ENCODE measurements at regions of chr14 and their contacts with region 1.

Region 1: GRCh38 chr14:58244556-58245387 is at the start of gene PSMA3:
- DNase-seq: peak; percentile 98
- ATAC-seq: peak; percentile 92
- H3K4me3 Mint-ChIP-seq: peak within 1 kb of the TSS; percentile 85
- H3K27ac Mint-ChIP-seq: peak within 1 kb of the TSS; percentile 99
- H3K4me1 Mint-ChIP-seq: peaks cover 31% of the 10 kb centered on the region
- H3K27me3 Mint-ChIP-seq: peaks cover under 1% of the 10 kb centered on the region
- CTCF ChIP-seq: no peak
- total RNA-seq, gene PSMA3: 378 to 401 TPM

Region 2: GRCh38 chr14:58199726-58200479 is 44.9 kb before region 1 on chr14 and contains the start of gene ACTR10:
- CTCF ChIA-PET with region 1: interaction called, 3 read pairs
- POLR2A ChIA-PET with region 1: interaction called, 5 read pairs
- intact Hi-C with region 1: loop called (anchors 5 kb)
- DNase-seq: peak; percentile 93
- ATAC-seq: peak; percentile 93
- H3K4me3 Mint-ChIP-seq: peak within 1 kb of the TSS; percentile 93
- H3K27ac Mint-ChIP-seq: peak within 1 kb of the TSS; percentile 93
- H3K4me1 Mint-ChIP-seq: peaks cover 28% of the 10 kb centered on the region
- H3K27me3 Mint-ChIP-seq: no peaks in the 10 kb centered on the region
- CTCF ChIP-seq: no peak
- total RNA-seq, gene ACTR10: 30.3 to 36.5 TPM

Region 3: GRCh38 chr14:58258156-58258555 is 13.4 kb after region 1 on chr14:
- CTCF ChIA-PET with region 1: interaction called, 6 read pairs
- POLR2A ChIA-PET with region 1: interaction called, 24 read pairs
- intact Hi-C with region 1: no loop called
- DNase-seq: no peak
- ATAC-seq: no peak
- H3K4me3 Mint-ChIP-seq: no peak overlapping the region
- H3K27ac Mint-ChIP-seq: peak overlapping the region; percentile 50
- H3K4me1 Mint-ChIP-seq: peaks cover 2% of the 10 kb centered on the region
- H3K27me3 Mint-ChIP-seq: no peaks in the 10 kb centered on the region
- CTCF ChIP-seq: no peak

Region 4: GRCh38 chr14:58265401-58265800 is 20.6 kb after region 1 on chr14:
- CTCF ChIA-PET with region 1: interaction called, 5 read pairs
- POLR2A ChIA-PET with region 1: interaction called, 24 read pairs
- intact Hi-C with region 1: no loop called
- DNase-seq: no peak
- ATAC-seq: no peak
- H3K4me3 Mint-ChIP-seq: no peak overlapping the region
- H3K27ac Mint-ChIP-seq: peak overlapping the region; percentile 63
- H3K4me1 Mint-ChIP-seq: peaks cover 14% of the 10 kb centered on the region
- H3K27me3 Mint-ChIP-seq: no peaks in the 10 kb centered on the region
- CTCF ChIP-seq: no peak

Region 5: GRCh38 chr14:58280954-58281787 is 36.4 kb after region 1 on chr14:
- CTCF ChIA-PET with region 1: no interaction called
- POLR2A ChIA-PET with region 1: interaction called, 4 read pairs
- intact Hi-C with region 1: loop called (anchors 5 kb)
- DNase-seq: peak; percentile 42
- ATAC-seq: peak; percentile 82
- H3K4me3 Mint-ChIP-seq: peak overlapping the region; percentile 59
- H3K27ac Mint-ChIP-seq: peak overlapping the region; percentile 96
- H3K4me1 Mint-ChIP-seq: peaks cover 70% of the 10 kb centered on the region
- H3K27me3 Mint-ChIP-seq: no peaks in the 10 kb centered on the region
- CTCF ChIP-seq: no peak

Region 6: GRCh38 chr14:58297762-58298476 is 53.1 kb after region 1 on chr14:
- CTCF ChIA-PET with region 1: interaction called, 3 read pairs
- POLR2A ChIA-PET with region 1: interaction called, 22 read pairs
- intact Hi-C with region 1: loop called (anchors 2 kb)
- DNase-seq: peak; percentile 99
- ATAC-seq: peak; percentile 88
- H3K4me3 Mint-ChIP-seq: no peak overlapping the region
- H3K27ac Mint-ChIP-seq: no peak overlapping the region
- H3K4me1 Mint-ChIP-seq: peaks cover 37% of the 10 kb centered on the region
- H3K27me3 Mint-ChIP-seq: no peaks in the 10 kb centered on the region
- CTCF ChIP-seq: no peak

Region 7: GRCh38 chr14:58427281-58428117 is 182.7 kb after region 1 on chr14 and contains the starts of genes KIAA0586 and TIMM9:
- CTCF ChIA-PET with region 1: no interaction called
- POLR2A ChIA-PET with region 1: interaction called, 5 read pairs
- intact Hi-C with region 1: loop called (anchors 5 kb)
- DNase-seq: peak; percentile 98
- ATAC-seq: peak; percentile 91
- H3K4me3 Mint-ChIP-seq: peak within 1 kb of the TSS; percentile 88
- H3K27ac Mint-ChIP-seq: peak within 1 kb of the TSS; percentile 99
- H3K4me1 Mint-ChIP-seq: peaks cover 33% of the 10 kb centered on the region
- H3K27me3 Mint-ChIP-seq: no peaks in the 10 kb centered on the region
- CTCF ChIP-seq: no peak
- total RNA-seq, gene KIAA0586: 23.4 TPM
- total RNA-seq, gene TIMM9: 63.9 to 71.8 TPM

Region 8: GRCh38 chr14:59187802-59188460 is 943.2 kb after region 1 on chr14:
- CTCF ChIA-PET with region 1: no interaction called
- POLR2A ChIA-PET with region 1: no interaction called
- intact Hi-C with region 1: no loop called
- DNase-seq: peak; percentile 57
- ATAC-seq: peak; percentile 3
- H3K4me3 Mint-ChIP-seq: peak overlapping the region; percentile 87
- H3K27ac Mint-ChIP-seq: peak overlapping the region; percentile 68
- H3K4me1 Mint-ChIP-seq: peaks cover 10% of the 10 kb centered on the region
- H3K27me3 Mint-ChIP-seq: peaks cover 12% of the 10 kb centered on the region
- CTCF ChIP-seq: no peak

Measured in activated CD8-positive, alpha-beta T cell treated with anti-CD3 and anti-CD28 coated beads for 36 hours (primary cell).